MCF 10A (cell line): ENCODE measurements at regions of chr20 and their contacts with region 1.

Region 1: DNA sequence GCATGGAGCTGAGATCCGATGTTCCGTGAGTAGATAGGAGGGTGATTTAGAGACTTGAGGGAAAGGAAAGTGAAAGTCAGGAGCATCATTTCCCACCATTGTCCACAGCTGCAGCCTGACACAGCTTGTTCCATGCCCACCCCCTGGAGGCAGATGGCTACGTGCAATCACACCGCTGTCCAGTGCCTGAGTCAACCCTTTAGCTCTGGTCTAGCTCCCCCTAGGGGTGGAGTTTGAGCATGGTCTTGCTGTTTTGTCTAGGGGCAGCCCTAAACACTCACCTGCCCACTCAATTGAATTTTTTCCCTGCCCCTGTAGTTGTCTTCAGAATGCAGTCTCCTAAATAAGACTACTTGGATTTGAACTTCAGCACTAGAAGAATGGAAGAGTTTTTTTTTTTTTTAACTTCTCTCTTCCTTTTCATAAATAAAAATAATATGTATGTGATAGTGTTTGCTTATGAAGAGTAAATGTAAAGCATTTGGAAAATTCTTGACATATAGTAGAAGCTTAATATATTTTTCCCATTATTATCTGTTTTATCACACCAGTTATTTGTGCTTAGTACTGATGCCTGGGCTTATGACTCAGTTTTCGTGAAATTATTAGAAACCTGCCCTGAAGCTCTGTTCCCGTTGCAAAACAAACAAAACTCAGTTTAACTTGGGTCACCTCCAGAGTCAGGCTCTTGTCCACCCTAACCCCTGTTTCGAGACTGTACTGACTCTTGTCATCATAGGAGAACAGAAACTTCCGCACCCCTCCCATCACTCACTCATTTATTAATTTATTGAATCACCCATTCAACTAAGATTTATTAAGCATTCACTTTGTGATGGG is 814.8 kb downstream of the MAFB start:
- DNase-seq: peak; percentile 88
- H3K4me3 Mint-ChIP-seq: no peak overlapping the region
- H3K27ac Mint-ChIP-seq: no peak overlapping the region
- H3K4me1 Mint-ChIP-seq: peaks cover 50% of the 10 kb centered on the region
- H3K27me3 Mint-ChIP-seq: no peaks in the 10 kb centered on the region
- CTCF ChIP-seq: peak; percentile 93

Region 2: GRCh38 chr20:39270837-39271604 is 603.2 kb before region 1 on chr20:
- CTCF ChIA-PET with region 1: interaction called, 26 read pairs
- POLR2A ChIA-PET with region 1: interaction called, 5 read pairs
- intact Hi-C with region 1: loop called (anchors 1 kb)
- DNase-seq: no peak
- H3K4me3 Mint-ChIP-seq: no peak overlapping the region
- H3K27ac Mint-ChIP-seq: no peak overlapping the region
- H3K4me1 Mint-ChIP-seq: peaks cover 5% of the 10 kb centered on the region
- H3K27me3 Mint-ChIP-seq: no peaks in the 10 kb centered on the region
- CTCF ChIP-seq: no peak

Region 3: GRCh38 chr20:39676857-39677391 is 197.3 kb before region 1 on chr20:
- CTCF ChIA-PET with region 1: interaction called, 4 read pairs
- POLR2A ChIA-PET with region 1: no interaction called
- intact Hi-C with region 1: loop called (anchors 1 kb)
- DNase-seq: peak; percentile 47
- H3K4me3 Mint-ChIP-seq: no peak overlapping the region
- H3K27ac Mint-ChIP-seq: no peak overlapping the region
- H3K4me1 Mint-ChIP-seq: no peaks in the 10 kb centered on the region
- H3K27me3 Mint-ChIP-seq: no peaks in the 10 kb centered on the region
- CTCF ChIP-seq: peak; percentile 50

Region 4: DNA sequence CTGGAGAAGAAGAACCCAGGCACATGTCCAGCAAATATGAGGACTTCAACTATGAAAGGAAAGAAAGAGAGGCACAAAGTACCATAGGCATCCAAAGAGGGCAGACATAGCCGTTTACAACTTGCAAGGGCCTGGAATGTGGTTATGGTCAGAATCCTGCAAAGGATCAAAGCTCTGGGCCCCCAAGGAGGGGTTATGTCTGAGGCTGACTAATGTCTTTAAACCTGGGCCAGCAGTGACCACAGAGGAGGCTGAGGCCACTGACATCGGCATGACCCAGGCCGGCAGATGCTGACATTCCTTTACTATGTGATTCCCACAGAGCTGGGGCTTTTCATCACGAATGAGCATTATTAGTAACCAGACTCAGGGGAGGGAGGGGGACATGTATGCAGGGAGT is 51.0 kb before region 1 on chr20:
- CTCF ChIA-PET with region 1: interaction called, 11 read pairs
- POLR2A ChIA-PET with region 1: interaction called, 7 read pairs
- intact Hi-C with region 1: no loop called
- DNase-seq: no peak
- H3K4me3 Mint-ChIP-seq: no peak overlapping the region
- H3K27ac Mint-ChIP-seq: no peak overlapping the region
- H3K4me1 Mint-ChIP-seq: peaks cover 28% of the 10 kb centered on the region
- H3K27me3 Mint-ChIP-seq: no peaks in the 10 kb centered on the region
- CTCF ChIP-seq: no peak

Region 5: DNA sequence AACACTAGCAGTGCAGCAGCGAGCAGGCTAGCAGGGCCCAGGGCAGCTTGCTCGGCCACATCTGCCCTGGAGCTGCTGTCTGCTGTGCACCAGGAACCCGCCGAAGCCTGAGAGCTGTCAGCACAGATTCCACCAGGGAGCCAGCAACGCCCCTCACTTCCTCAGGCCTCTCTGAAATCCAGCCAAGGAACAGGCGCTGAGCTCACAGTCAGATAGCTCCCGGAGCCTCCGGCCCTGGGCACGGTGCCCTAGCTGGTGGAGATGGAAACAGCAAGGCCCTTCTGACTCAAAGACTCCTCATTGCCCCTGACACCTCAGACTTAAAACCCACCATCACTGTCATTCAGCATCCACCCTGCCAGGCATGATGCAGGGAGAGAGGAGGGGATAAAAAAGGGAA is 24.6 kb before region 1 on chr20:
- CTCF ChIA-PET with region 1: interaction called, 35 read pairs
- POLR2A ChIA-PET with region 1: interaction called, 6 read pairs
- intact Hi-C with region 1: no loop called
- DNase-seq: peak; percentile 94
- H3K4me3 Mint-ChIP-seq: no peak overlapping the region
- H3K27ac Mint-ChIP-seq: no peak overlapping the region
- H3K4me1 Mint-ChIP-seq: peaks cover 38% of the 10 kb centered on the region
- H3K27me3 Mint-ChIP-seq: no peaks in the 10 kb centered on the region
- CTCF ChIP-seq: no peak

Region 6: GRCh38 chr20:39861381-39861780 is 12.9 kb before region 1 on chr20:
- CTCF ChIA-PET with region 1: interaction called, 17 read pairs
- POLR2A ChIA-PET with region 1: interaction called, 11 read pairs
- intact Hi-C with region 1: no loop called
- DNase-seq: peak; percentile 46
- H3K4me3 Mint-ChIP-seq: no peak overlapping the region
- H3K27ac Mint-ChIP-seq: peak overlapping the region; percentile 72
- H3K4me1 Mint-ChIP-seq: peaks cover 21% of the 10 kb centered on the region
- H3K27me3 Mint-ChIP-seq: no peaks in the 10 kb centered on the region
- CTCF ChIP-seq: no peak

Region 7: GRCh38 chr20:40090236-40090635 is 216.0 kb after region 1 on chr20:
- CTCF ChIA-PET with region 1: no interaction called
- POLR2A ChIA-PET with region 1: no interaction called
- intact Hi-C with region 1: no loop called
- DNase-seq: peak; percentile 42
- H3K4me3 Mint-ChIP-seq: no peak overlapping the region
- H3K27ac Mint-ChIP-seq: no peak overlapping the region
- H3K4me1 Mint-ChIP-seq: no peaks in the 10 kb centered on the region
- H3K27me3 Mint-ChIP-seq: no peaks in the 10 kb centered on the region
- CTCF ChIP-seq: no peak